Activated B cell treated with CpG ODN at 0.5 μM for 24 hours (primary cell): ENCODE measurements at regions of chr17 and their contacts with region 1.

Region 1: GRCh38 chr17:42819944-42820535 is 4.0 kb downstream of the BECN1 start:
- DNase-seq: peak; percentile 43
- ATAC-seq: peak; percentile 20
- H3K4me3 Mint-ChIP-seq: peak overlapping the region; percentile 28
- H3K27ac Mint-ChIP-seq: no peak overlapping the region
- H3K4me1 Mint-ChIP-seq: peaks cover 21% of the 10 kb centered on the region
- H3K27me3 Mint-ChIP-seq: no peaks in the 10 kb centered on the region
- CTCF ChIP-seq: no peak

Region 2: GRCh38 chr17:42677008-42677857 is 142.8 kb before region 1 on chr17:
- CTCF ChIA-PET with region 1: no interaction called
- POLR2A ChIA-PET with region 1: interaction called, 6 read pairs
- intact Hi-C with region 1: loop called (anchors 5 kb)
- DNase-seq: peak; percentile 86
- ATAC-seq: peak; percentile 74
- H3K4me3 Mint-ChIP-seq: peak overlapping the region; percentile 87
- H3K27ac Mint-ChIP-seq: peak overlapping the region; percentile 78
- H3K4me1 Mint-ChIP-seq: peaks cover 65% of the 10 kb centered on the region
- H3K27me3 Mint-ChIP-seq: peaks cover 12% of the 10 kb centered on the region
- CTCF ChIP-seq: no peak

Region 3: DNA sequence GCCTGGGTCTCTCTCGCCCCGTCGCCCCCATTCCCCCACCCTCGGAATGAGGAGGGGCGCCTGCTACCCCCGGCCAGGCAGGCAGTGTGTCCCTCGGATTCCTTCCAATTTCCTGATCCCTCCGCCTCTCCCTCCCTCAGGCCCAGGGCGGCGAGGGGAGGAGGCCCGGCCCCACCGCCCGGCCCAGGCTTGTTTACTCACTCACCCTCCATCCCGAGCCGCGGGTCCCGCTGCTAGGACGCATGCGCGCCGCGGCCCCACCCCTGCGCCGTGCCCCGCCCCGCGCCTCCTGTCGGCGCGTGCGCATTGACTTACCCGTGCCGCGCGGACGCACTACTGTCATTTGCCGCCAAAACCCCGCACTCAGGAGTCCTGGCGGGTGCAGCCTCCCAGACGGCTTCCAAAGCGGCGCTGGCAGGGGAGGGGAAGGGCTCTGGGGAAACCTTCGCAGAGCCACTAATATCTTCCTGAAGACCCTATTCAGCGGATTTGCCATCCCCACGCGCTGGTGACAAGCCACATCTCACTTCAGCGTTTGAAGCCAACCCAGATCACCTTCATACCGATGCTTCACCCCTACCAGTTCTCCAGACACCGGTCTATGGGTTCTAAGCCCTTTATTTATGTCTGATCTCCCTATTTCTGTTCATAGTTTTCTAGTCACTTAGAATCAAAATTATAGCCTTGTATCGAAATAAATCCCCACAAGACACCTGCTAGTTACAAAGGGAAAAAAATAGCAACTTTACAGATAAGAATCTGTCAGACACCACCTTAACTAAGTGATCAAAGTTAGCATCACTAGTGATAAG is 75.0 kb before region 1 on chr17 and contains the start of gene EZH1:
- CTCF ChIA-PET with region 1: no interaction called
- POLR2A ChIA-PET with region 1: interaction called, 9 read pairs
- intact Hi-C with region 1: loop called (anchors 5 kb)
- DNase-seq: peak; percentile 96
- ATAC-seq: peak; percentile 87
- H3K4me3 Mint-ChIP-seq: peak within 1 kb of the TSS; percentile 96
- H3K27ac Mint-ChIP-seq: peak within 1 kb of the TSS; percentile 96
- H3K4me1 Mint-ChIP-seq: peaks cover 28% of the 10 kb centered on the region
- H3K27me3 Mint-ChIP-seq: peaks cover 11% of the 10 kb centered on the region
- CTCF ChIP-seq: no peak
- total RNA-seq, gene EZH1: 74.7 and 81.6 TPM in 2 replicates

Region 4: GRCh38 chr17:42798383-42799380 is 21.4 kb before region 1 on chr17 and contains the starts of genes CNTD1 and COA3:
- CTCF ChIA-PET with region 1: interaction called, 10 read pairs
- POLR2A ChIA-PET with region 1: interaction called, 6 read pairs
- intact Hi-C with region 1: loop called (anchors 1 kb)
- DNase-seq: peak; percentile 69
- ATAC-seq: peak; percentile 100
- H3K4me3 Mint-ChIP-seq: peak within 1 kb of the TSS; percentile 97
- H3K27ac Mint-ChIP-seq: peak within 1 kb of the TSS; percentile 81
- H3K4me1 Mint-ChIP-seq: peaks cover 28% of the 10 kb centered on the region
- H3K27me3 Mint-ChIP-seq: no peaks in the 10 kb centered on the region
- CTCF ChIP-seq: no peak
- total RNA-seq, gene CNTD1: not detected in 2 replicates
- total RNA-seq, gene COA3: 41.4 and 48.0 TPM in 2 replicates

Region 5: GRCh38 chr17:42928714-42929496 is 108.9 kb after region 1 on chr17:
- CTCF ChIA-PET with region 1: interaction called, 11 read pairs
- POLR2A ChIA-PET with region 1: interaction called, 8 read pairs
- intact Hi-C with region 1: loop called (anchors 1 kb)
- DNase-seq: no peak
- ATAC-seq: peak; percentile 89
- H3K4me3 Mint-ChIP-seq: no peak overlapping the region
- H3K27ac Mint-ChIP-seq: peak overlapping the region; percentile 75
- H3K4me1 Mint-ChIP-seq: peaks cover 9% of the 10 kb centered on the region
- H3K27me3 Mint-ChIP-seq: peaks cover 2% of the 10 kb centered on the region
- CTCF ChIP-seq: no peak

Region 6: DNA sequence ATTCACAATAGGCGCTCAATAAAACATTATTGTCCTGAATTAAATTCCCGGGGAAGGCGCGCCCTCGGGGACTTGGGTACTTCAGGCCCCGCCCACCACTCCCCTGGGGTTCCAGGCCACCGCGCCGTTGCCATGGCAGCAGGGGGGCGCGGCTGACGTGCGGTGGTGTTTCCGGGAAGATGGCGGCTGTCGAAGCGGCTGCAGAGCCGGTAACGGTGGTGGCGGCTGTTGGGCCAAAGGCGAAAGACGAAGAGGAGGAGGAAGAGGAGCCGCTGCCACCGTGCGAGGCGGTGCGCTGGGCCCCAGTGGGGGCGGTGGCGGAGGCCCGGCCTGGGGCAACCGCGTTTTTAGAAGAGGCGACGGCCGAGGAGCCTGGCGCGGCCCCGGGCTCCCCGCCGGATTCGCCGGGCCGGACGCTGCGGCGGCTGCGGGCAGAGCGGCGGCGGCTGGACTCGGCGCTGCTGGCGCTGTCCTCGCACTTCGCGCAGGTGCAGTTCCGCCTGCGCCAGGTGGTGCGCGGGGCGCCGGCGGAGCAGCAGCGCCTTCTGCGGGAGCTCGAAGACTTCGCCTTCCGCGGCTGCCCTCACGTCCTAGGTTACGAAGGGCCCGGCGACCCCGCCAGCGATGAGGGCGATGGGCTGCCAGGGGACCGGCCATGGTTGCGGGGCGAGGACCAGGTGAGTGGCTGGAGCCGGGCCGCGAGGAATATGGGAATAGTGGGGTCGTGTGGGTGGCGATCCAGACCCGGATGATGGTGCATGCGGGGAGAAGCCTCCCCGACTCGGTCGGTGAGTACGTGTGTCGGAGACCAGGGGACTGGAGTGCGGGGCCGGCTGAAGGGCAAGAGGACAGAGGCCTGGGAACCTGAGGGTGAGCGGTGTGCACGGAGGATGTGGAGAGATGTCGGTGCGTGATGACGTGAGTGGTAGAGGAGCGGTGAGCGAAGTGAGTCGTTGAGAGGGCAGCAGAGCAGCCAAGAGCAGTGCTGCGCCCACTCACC is 160.7 kb after region 1 on chr17 and contains the start of gene RUNDC1:
- CTCF ChIA-PET with region 1: no interaction called
- POLR2A ChIA-PET with region 1: interaction called, 13 read pairs
- intact Hi-C with region 1: no loop called
- DNase-seq: peak; percentile 94
- ATAC-seq: peak; percentile 76
- H3K4me3 Mint-ChIP-seq: peak within 1 kb of the TSS; percentile 99
- H3K27ac Mint-ChIP-seq: peak within 1 kb of the TSS; percentile 98
- H3K4me1 Mint-ChIP-seq: peaks cover 53% of the 10 kb centered on the region
- H3K27me3 Mint-ChIP-seq: no peaks in the 10 kb centered on the region
- CTCF ChIP-seq: no peak
- total RNA-seq, gene RUNDC1: 28.3 and 30.9 TPM in 2 replicates